ENCODE measurements at regions of chr9 and their contacts with region 1.

Region 1: GRCh38 chr9:98303623-98304125 is 48.2 kb upstream of the TBC1D2 start:
- DNase-seq: no peak
- H3K4me3 ChIP-seq: no peak overlapping the region
- H3K4me3 Mint-ChIP-seq: no peak overlapping the region
- H3K27ac ChIP-seq: no peak overlapping the region
- H3K27ac Mint-ChIP-seq: no peak overlapping the region
- H3K4me1 ChIP-seq: no peaks in the 10 kb centered on the region
- H3K4me1 Mint-ChIP-seq: no peaks in the 10 kb centered on the region
- H3K27me3 ChIP-seq: no peaks in the 10 kb centered on the region
- H3K27me3 Mint-ChIP-seq: peaks cover 1 to 4% of the 10 kb centered on the region in 2 donors

Region 2: GRCh38 chr9:98146101-98146991 is 157.3 kb before region 1 on chr9:
- CTCF ChIA-PET with region 1: no interaction called
- POLR2A ChIA-PET with region 1: no interaction called
- DNase-seq: no peak
- H3K4me3 ChIP-seq: no peak overlapping the region
- H3K4me3 Mint-ChIP-seq: no peak overlapping the region
- H3K27ac ChIP-seq: no peak overlapping the region
- H3K27ac Mint-ChIP-seq: peak overlapping the region in 2 of 8 donors; percentile 35 to 54
- H3K4me1 ChIP-seq: no peaks in the 10 kb centered on the region
- H3K4me1 Mint-ChIP-seq: peaks cover 16 to 29% (median 26%) of the 10 kb centered on the region in 3 donors
- H3K27me3 ChIP-seq: no peaks in the 10 kb centered on the region
- H3K27me3 Mint-ChIP-seq: no peaks in the 10 kb centered on the region

Region 3: GRCh38 chr9:98315551-98316060 is 11.9 kb after region 1 on chr9:
- CTCF ChIA-PET with region 1: interaction called, 14 read pairs
- POLR2A ChIA-PET with region 1: no interaction called
- DNase-seq: peak; percentile 51 to 78 (median 59)
- H3K4me3 ChIP-seq: no peak overlapping the region
- H3K4me3 Mint-ChIP-seq: no peak overlapping the region
- H3K27ac ChIP-seq: no peak overlapping the region
- H3K27ac Mint-ChIP-seq: no peak overlapping the region
- H3K4me1 ChIP-seq: no peaks in the 10 kb centered on the region
- H3K4me1 Mint-ChIP-seq: no peaks in the 10 kb centered on the region
- H3K27me3 ChIP-seq: no peaks in the 10 kb centered on the region
- H3K27me3 Mint-ChIP-seq: peaks cover 2 to 9% of the 10 kb centered on the region in 2 donors

Measured in CD8-positive, alpha-beta memory T cell (primary cell).